Activated naive CD8-positive, alpha-beta T cell treated with anti-CD3 and anti-CD28 coated beads, Interleukin-2, amount 10 ng/mL, durations not matched to agents 7 days and 5 days (primary cell): ENCODE measurements at regions of chrX and their contacts with region 1.

Region 1: GRCh38 chrX:40062525-40063155 is 35.1 kb downstream of the BCOR start:
- DNase-seq: no peak
- ATAC-seq: no peak
- H3K4me3 Mint-ChIP-seq: no peak overlapping the region
- H3K27ac Mint-ChIP-seq: peak overlapping the region; percentile 58
- H3K4me1 Mint-ChIP-seq: peaks cover 49% of the 10 kb centered on the region
- H3K27me3 Mint-ChIP-seq: no peaks in the 10 kb centered on the region

Region 2: DNA sequence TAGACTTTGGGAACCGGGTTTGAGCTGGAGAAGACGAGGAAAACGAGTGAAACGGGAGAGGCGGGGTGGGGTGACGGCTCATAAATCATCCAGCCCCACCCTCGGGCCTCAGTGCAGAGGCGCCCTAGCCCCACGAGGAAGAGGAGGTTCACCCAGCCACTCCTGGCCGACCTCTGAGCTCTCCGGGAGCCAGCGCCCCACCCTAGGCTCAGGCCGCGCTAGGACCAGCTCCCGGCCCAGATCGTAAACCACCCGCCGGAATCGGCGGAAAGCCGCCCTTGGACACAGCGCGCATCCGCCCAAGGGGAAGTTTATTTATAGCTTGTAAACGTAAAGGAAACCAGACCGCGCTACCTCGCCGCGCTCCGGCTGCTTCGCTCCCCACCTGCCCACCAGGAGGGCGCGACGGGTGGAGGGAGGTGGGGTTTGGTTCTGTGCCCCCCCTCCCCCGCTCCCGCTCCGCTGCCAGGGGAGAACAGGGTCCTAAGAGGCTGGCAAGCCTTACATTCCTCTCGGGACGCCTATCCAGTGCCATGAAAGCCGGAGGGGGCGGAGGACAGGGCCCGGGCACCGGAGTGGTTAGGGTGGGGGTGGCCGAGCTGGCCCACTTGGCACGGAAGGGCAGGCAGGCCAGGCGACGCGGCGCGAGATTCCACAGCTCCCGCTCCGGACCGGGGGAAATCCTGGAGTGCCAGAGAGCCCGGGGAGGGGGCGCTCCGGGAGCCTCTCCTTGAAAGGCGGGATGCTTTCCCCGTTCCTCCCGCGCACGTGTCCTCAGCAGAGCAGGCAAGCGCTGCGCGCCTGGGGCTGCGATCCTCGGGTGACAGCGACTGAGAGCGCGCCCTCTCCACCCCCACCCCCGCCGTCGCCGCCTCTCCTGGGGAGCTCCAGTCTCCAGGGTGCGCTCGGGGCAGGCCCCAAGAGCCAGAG is 49.1 kb before region 1 on chrX:
- POLR2A ChIA-PET with region 1: interaction called, 10 read pairs
- DNase-seq: peak; percentile 62
- ATAC-seq: peak; percentile 46
- H3K4me3 Mint-ChIP-seq: peak overlapping the region; percentile 75
- H3K27ac Mint-ChIP-seq: peak overlapping the region; percentile 80
- H3K4me1 Mint-ChIP-seq: peaks cover 22% of the 10 kb centered on the region
- H3K27me3 Mint-ChIP-seq: peaks cover 11% of the 10 kb centered on the region

Region 3: GRCh38 chrX:40300286-40300925 is 237.8 kb after region 1 on chrX:
- POLR2A ChIA-PET with region 1: no interaction called
- DNase-seq: no peak
- ATAC-seq: no peak
- H3K4me3 Mint-ChIP-seq: no peak overlapping the region
- H3K27ac Mint-ChIP-seq: no peak overlapping the region
- H3K4me1 Mint-ChIP-seq: peaks cover 3% of the 10 kb centered on the region
- H3K27me3 Mint-ChIP-seq: peaks cover 3% of the 10 kb centered on the region